Right cardiac atrium (tissue), 5 donors: ENCODE measurements at regions of chr5 and their contacts with region 1.

Region 1: DNA sequence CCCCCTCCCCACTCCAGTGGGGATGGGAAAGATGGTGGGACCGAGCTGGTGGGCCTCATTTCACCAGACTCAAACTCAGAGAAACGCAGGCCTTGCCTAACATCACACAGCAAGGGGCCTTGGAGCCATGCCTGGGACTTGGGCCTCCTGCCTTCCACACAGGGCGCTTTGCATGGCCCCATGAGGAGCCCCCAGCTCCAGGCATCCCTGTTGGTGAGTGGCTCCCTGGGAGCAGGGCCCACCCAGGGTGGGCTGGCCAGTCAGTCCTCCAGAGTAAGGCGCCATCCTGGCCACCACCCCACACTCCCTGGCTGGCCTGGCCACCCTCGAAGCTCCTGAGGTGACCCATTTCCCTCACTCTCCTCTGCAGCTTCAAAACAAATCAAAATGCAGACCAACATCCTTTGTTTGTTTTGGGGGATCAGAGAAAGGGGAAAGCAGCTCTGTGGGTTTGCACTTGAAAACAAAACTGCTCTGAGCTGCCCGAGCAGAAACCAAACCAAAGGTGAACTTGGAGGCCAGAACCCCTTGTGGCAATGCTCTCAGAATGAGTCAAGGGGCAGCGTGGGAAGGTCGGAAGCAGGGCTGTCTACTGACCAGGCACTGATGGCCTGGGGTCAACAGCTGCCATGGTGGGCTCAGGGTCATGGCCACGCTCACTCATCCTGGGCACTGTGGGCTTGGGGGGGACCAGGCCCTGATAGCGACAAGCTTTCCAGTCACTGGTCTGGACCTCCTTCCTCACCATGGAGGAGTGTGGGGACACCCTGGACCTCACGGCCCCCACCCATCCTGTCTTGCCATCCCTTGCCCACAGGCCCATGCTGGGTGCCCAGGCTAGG is 37.0 kb upstream of the VDAC1 start:
- DNase-seq: no peak
- ATAC-seq: no peak
- H3K4me3 ChIP-seq: no peak overlapping the region
- H3K27ac ChIP-seq: no peak overlapping the region
- H3K4me1 ChIP-seq: no peaks in the 10 kb centered on the region
- H3K27me3 ChIP-seq: no peaks in the 10 kb centered on the region

Region 2: GRCh38 chr5:134140530-134141201 is 98.9 kb after region 1 on chr5:
- intact Hi-C with region 1: loop called (anchors 2 to 10 kb)
- DNase-seq: peak; percentile 57 to 83 (median 76)
- ATAC-seq: peak; percentile 55 to 66
- H3K4me3 ChIP-seq: no peak overlapping the region
- H3K27ac ChIP-seq: no peak overlapping the region
- H3K4me1 ChIP-seq: peaks cover 2% of the 10 kb centered on the region
- H3K27me3 ChIP-seq: no peaks in the 10 kb centered on the region

Region 3: GRCh38 chr5:134145779-134146581 is 104.2 kb after region 1 on chr5:
- intact Hi-C with region 1: loop called in 3 of 4 experiments (anchors 2 to 10 kb)
- DNase-seq: peak; percentile 69 to 92 (median 86)
- ATAC-seq: peak; percentile 77 to 80
- H3K4me3 ChIP-seq: no peak overlapping the region
- H3K27ac ChIP-seq: no peak overlapping the region
- H3K4me1 ChIP-seq: peaks cover 8% of the 10 kb centered on the region
- H3K27me3 ChIP-seq: no peaks in the 10 kb centered on the region

Region 4: DNA sequence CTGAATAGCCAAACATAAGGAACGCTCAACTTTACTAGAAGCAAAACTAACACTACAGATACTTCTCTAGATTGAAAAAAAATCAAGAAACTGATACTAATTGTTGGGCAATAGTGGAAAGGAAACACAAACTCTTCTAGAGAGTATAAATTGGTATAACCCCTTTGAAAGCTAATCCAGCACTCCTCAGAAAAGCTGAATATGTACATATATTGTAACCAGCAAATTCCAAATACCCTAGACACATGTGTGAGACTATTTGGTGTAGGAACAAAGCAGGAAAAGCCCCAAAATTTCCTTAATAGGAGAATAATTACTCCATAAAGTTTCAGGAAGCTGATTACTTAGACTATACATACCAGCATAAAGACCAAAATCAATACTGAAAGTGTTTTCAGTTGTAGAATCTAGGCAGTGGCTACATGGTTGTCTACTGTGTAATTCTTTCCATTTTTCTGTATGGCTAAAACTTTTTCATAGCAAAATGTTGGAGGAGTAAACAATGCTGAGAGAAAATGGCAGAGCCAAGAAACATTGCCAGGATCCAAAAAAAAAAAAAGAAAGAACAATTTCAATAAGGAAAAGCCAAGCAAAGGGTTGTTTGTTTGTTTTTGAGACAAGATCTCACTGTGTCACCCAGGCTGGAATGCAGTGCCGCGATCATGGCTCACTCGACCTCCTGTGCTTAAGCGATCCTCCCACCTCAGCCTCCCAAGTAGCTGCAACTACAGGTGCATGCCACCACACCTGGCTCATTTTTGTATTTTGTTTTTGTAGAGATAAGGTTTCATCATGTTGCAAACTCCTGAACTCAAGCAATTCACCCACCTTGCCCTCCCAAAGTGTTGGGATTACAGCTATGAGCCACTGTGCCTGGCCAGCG is 120.0 kb after region 1 on chr5:
- intact Hi-C with region 1: no loop called
- DNase-seq: no peak
- ATAC-seq: no peak
- H3K4me3 ChIP-seq: no peak overlapping the region
- H3K27ac ChIP-seq: no peak overlapping the region
- H3K4me1 ChIP-seq: no peaks in the 10 kb centered on the region
- H3K27me3 ChIP-seq: no peaks in the 10 kb centered on the region

Region 5: GRCh38 chr5:134206627-134207160 is 164.9 kb after region 1 on chr5:
- intact Hi-C with region 1: no loop called
- DNase-seq: no peak
- ATAC-seq: peak in 1 of 2 donors; percentile 13
- H3K4me3 ChIP-seq: no peak overlapping the region
- H3K27ac ChIP-seq: no peak overlapping the region
- H3K4me1 ChIP-seq: peaks cover 11% of the 10 kb centered on the region
- H3K27me3 ChIP-seq: no peaks in the 10 kb centered on the region